GM12878 (cell line): ENCODE measurements at regions of chr12 and their contacts with region 1.

Region 1: GRCh38 chr12:68374307-68374982 is 42.3 kb upstream of the MDM1 start:
- DNase-seq: peak; percentile 98
- ATAC-seq: peak; percentile 88
- H3K4me3 ChIP-seq: peak overlapping the region; percentile 4; the same call in 1 of the 2 replicates
- H3K27ac ChIP-seq: peak overlapping the region; percentile 82
- H3K4me1 ChIP-seq: peaks cover 34% of the 10 kb centered on the region
- H3K27me3 ChIP-seq: no peaks in the 10 kb centered on the region
- CTCF ChIP-seq: no peak
- EP300 ChIP-seq: peak; percentile 97 to 98
- POLR2A ChIP-seq: no peak
- RAD21 ChIP-seq: no peak

Region 2: GRCh38 chr12:68387338-68387737 is 12.9 kb after region 1 on chr12:
- CTCF ChIA-PET with region 1: interaction called, 9 read pairs
- POLR2A ChIA-PET with region 1: interaction called, 5 read pairs
- RAD21 ChIA-PET with region 1: interaction called, 10 read pairs
- SMC1A ChIA-PET with region 1: interaction called, 97 read pairs
- in situ Hi-C with region 1: no loop called
- intact Hi-C with region 1: no loop called
- DNase-seq: no peak
- ATAC-seq: peak; percentile 78
- H3K4me3 ChIP-seq: no peak overlapping the region
- H3K27ac ChIP-seq: no peak overlapping the region
- H3K4me1 ChIP-seq: no peaks in the 10 kb centered on the region
- H3K27me3 ChIP-seq: no peaks in the 10 kb centered on the region
- CTCF ChIP-seq: no peak
- EP300 ChIP-seq: no peak
- POLR2A ChIP-seq: no peak
- RAD21 ChIP-seq: no peak

Region 3: GRCh38 chr12:68400226-68400829 is 25.9 kb after region 1 on chr12:
- CTCF ChIA-PET with region 1: no interaction called
- POLR2A ChIA-PET with region 1: interaction called, 11 read pairs
- RAD21 ChIA-PET with region 1: interaction called, 4 read pairs
- SMC1A ChIA-PET with region 1: interaction called, 97 read pairs
- in situ Hi-C with region 1: no loop called
- intact Hi-C with region 1: no loop called
- DNase-seq: no peak
- ATAC-seq: no peak
- H3K4me3 ChIP-seq: no peak overlapping the region
- H3K27ac ChIP-seq: no peak overlapping the region
- H3K4me1 ChIP-seq: no peaks in the 10 kb centered on the region
- H3K27me3 ChIP-seq: no peaks in the 10 kb centered on the region
- CTCF ChIP-seq: no peak
- EP300 ChIP-seq: no peak
- POLR2A ChIP-seq: no peak
- RAD21 ChIP-seq: no peak

Region 4: DNA sequence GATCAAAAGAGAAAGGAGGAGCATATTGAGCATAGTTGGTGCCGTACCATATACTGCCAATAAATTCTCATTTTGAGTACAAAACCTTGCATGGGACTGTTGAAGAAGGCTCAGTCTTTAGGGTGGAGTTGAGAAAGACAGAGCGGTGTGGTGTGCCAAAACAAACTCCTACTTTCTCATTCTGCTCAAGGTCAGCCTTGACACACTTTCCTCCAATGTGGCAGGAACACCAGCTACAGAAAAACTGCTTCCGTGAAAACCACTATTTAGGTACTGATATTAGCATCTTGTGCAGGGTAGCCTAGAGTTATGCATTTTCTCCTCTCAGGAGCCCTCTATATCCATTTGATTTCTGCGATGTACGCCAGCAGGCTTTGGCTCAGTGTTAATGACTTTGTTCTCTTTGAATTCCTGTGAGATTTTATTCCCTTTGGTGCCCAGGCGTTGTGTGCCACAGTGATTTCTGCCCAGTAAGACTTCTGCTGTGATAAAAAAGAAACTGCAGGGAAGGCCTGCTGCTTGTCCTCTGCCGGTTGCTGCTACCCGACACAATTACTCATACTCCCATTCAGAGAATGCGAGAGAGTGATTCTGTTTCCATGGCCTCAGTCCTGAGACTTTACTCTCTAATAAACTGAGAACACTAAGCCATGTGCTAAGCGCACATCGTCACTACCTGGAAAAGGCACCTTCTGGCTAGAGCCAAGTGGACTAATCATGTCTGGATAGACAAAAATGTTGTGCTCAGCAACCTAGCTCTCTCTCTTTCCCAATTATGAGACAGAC is 46.0 kb after region 1 on chr12:
- CTCF ChIA-PET with region 1: interaction called, 6 read pairs
- POLR2A ChIA-PET with region 1: interaction called, 6 read pairs
- RAD21 ChIA-PET with region 1: interaction called, 11 read pairs
- SMC1A ChIA-PET with region 1: interaction called, 42 read pairs
- in situ Hi-C with region 1: no loop called
- intact Hi-C with region 1: no loop called
- DNase-seq: no peak
- ATAC-seq: no peak
- H3K4me3 ChIP-seq: no peak overlapping the region
- H3K27ac ChIP-seq: no peak overlapping the region
- H3K4me1 ChIP-seq: no peaks in the 10 kb centered on the region
- H3K27me3 ChIP-seq: no peaks in the 10 kb centered on the region
- CTCF ChIP-seq: no peak
- EP300 ChIP-seq: no peak
- POLR2A ChIP-seq: no peak
- RAD21 ChIP-seq: no peak

Region 5: DNA sequence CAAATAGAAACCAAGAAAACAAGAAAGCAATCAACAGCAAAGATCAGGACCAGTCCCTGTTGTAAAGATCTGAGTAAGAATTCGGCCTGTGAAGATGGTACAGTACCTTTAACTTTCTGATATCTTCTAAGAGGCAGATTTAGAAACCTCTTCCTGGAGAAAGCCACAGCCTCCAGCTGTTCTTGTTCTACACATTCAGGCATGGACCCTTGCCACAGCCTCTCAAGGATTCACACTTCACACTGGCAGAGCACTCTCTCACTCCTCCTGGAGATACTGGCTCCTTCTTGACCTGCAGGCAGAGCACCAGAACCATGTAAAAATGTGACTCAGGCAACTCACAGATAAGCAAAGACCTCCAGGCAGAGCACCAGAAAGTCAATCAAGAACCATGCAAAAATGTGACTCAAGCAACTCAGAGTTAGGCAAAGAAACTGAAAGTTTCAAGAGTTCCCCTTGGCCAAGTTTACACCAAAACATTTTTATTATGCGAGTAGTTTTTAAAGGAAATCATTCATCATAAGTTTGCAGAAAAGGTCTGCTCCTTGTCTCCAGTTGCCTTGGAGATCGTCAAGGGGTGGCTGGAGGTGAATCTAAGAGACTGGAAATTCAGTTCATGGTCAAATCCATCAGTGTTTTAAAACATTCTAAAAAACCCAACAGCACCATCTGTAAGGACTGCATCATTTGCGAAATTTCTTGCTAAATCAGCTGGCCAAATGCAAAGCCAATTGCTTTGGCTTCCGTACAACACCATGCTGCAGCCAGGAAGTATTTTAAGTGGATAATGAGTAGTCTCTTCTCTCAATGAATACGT is 77.0 kb after region 1 on chr12:
- CTCF ChIA-PET with region 1: interaction called, 3 read pairs
- POLR2A ChIA-PET with region 1: interaction called, 13 read pairs
- RAD21 ChIA-PET with region 1: interaction called, 58 read pairs
- SMC1A ChIA-PET with region 1: interaction called, 19 read pairs
- in situ Hi-C with region 1: no loop called
- intact Hi-C with region 1: loop called (anchors 1 kb)
- DNase-seq: peak; percentile 88
- ATAC-seq: peak; percentile 78
- H3K4me3 ChIP-seq: peak overlapping the region; percentile 51
- H3K27ac ChIP-seq: peak overlapping the region; percentile 73
- H3K4me1 ChIP-seq: peaks cover 36% of the 10 kb centered on the region
- H3K27me3 ChIP-seq: no peaks in the 10 kb centered on the region
- CTCF ChIP-seq: no peak
- EP300 ChIP-seq: peak; percentile 32 to 50; a peak in 2 of 4 replicates
- POLR2A ChIP-seq: no peak
- RAD21 ChIP-seq: no peak

Region 6: DNA sequence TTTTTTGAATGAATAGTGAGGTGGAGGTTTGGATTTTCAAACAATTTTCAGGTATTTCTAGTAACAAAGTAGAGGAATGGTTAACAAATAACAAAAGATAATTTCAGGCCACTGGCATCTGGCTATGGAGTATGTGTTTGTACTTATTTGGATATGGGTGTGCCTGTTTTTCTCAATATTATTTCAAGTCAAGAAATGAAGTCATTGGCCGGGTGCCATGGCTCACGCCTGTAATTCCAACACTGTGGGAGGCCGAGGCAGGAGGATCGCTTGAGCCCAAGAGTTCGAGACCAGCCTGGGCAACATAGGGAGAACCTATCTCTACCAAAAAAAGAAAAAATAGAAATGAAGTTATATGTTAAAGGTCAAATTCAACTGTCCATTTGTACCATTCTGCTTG is 385.4 kb after region 1 on chr12:
- CTCF ChIA-PET with region 1: no interaction called
- POLR2A ChIA-PET with region 1: no interaction called
- RAD21 ChIA-PET with region 1: no interaction called
- SMC1A ChIA-PET with region 1: no interaction called
- in situ Hi-C with region 1: no loop called
- intact Hi-C with region 1: no loop called
- DNase-seq: no peak
- ATAC-seq: no peak
- H3K4me3 ChIP-seq: no peak overlapping the region
- H3K27ac ChIP-seq: no peak overlapping the region
- H3K4me1 ChIP-seq: no peaks in the 10 kb centered on the region
- H3K27me3 ChIP-seq: no peaks in the 10 kb centered on the region
- CTCF ChIP-seq: no peak
- EP300 ChIP-seq: no peak
- POLR2A ChIP-seq: no peak
- RAD21 ChIP-seq: no peak

Region 7: DNA sequence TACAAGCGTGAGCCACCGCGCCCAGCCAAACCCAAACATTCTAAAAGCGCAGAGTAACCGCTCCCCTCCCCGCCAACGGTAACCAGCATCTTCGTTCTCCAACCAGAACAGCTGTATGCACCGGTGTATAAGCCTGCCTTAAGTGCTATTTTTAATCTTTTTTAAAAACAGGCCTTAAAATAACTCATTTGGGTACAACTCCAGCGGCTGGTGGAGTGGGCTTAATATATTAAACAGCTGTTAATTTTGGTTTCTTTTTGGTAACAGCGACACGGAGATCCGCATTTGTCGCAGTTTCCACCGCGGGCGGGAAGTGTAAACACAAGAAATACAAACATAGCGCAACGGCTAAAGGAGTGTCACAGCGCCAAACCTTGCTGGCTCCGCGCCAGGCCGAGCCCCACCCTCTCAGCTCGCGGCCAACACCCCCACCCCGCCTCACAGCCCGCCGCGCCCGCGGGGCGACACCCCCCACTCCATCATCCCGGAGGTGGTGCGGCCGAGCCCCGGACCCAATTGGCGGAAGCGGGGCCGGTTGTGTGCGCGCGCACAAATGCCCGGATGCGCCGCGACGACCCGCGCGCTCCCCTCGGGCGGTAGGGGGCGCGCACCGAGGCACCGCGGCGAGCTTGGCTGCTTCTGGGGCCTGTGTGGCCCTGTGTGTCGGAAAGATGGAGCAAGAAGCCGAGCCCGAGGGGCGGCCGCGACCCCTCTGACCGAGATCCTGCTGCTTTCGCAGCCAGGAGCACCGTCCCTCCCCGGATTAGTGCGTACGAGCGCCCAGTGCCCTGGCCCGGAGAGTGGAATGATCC is 433.3 kb after region 1 on chr12 and contains the start of gene MDM2:
- CTCF ChIA-PET with region 1: no interaction called
- POLR2A ChIA-PET with region 1: interaction called, 4 read pairs
- RAD21 ChIA-PET with region 1: interaction called, 3 read pairs
- SMC1A ChIA-PET with region 1: interaction called, 3 read pairs
- in situ Hi-C with region 1: no loop called
- intact Hi-C with region 1: loop called (anchors 5 kb)
- DNase-seq: peak; percentile 94
- ATAC-seq: peak; percentile 84
- H3K4me3 ChIP-seq: peak within 1 kb of the TSS; percentile 83
- H3K27ac ChIP-seq: peak within 1 kb of the TSS; percentile 100
- H3K4me1 ChIP-seq: no peaks in the 10 kb centered on the region; the same call in 1 of the 2 replicates
- H3K27me3 ChIP-seq: no peaks in the 10 kb centered on the region
- CTCF ChIP-seq: peak; percentile 63 to 76 (median 72)
- EP300 ChIP-seq: peak; percentile 27 to 65; a peak in 2 of 4 replicates
- POLR2A ChIP-seq: peak; percentile 88
- RAD21 ChIP-seq: peak; percentile 30
- polyA plus RNA-seq, gene MDM2: 48.2 to 65.8 TPM